A549 (cell line): ENCODE measurements at regions of chr2 and their contacts with region 1.

Region 1: GRCh38 chr2:234135720-234136221 is 85.3 kb downstream of the SPP2 start:
- DNase-seq: peak; percentile 80 to 94
- ATAC-seq: peak; percentile 93 to 96
- H3K4me3 ChIP-seq: no peak overlapping the region
- H3K27ac ChIP-seq: peak overlapping the region; percentile 82 to 94
- H3K4me1 ChIP-seq: peaks cover 30% of the 10 kb centered on the region
- CTCF ChIP-seq: peak; percentile 92
- EP300 ChIP-seq: no peak
- POLR2A ChIP-seq: no peak
- RAD21 ChIP-seq: peak; percentile 99

Region 2: GRCh38 chr2:233976690-233977294 is 159.0 kb before region 1 on chr2:
- CTCF ChIA-PET with region 1: interaction called, 27 read pairs
- POLR2A ChIA-PET with region 1: interaction called, 3 read pairs
- DNase-seq: peak; percentile 64 to 84
- ATAC-seq: peak; percentile 44 to 80; a peak in 4 of 6 replicates
- H3K4me3 ChIP-seq: no peak overlapping the region
- H3K27ac ChIP-seq: peak overlapping the region; percentile 84 to 98
- H3K4me1 ChIP-seq: peaks cover 83% of the 10 kb centered on the region
- CTCF ChIP-seq: peak; percentile 94
- EP300 ChIP-seq: peak in 1 of 2 experiments; percentile 42; a peak in 2 of 5 replicates
- POLR2A ChIP-seq: no peak
- RAD21 ChIP-seq: peak; percentile 97 to 98

Region 3: DNA sequence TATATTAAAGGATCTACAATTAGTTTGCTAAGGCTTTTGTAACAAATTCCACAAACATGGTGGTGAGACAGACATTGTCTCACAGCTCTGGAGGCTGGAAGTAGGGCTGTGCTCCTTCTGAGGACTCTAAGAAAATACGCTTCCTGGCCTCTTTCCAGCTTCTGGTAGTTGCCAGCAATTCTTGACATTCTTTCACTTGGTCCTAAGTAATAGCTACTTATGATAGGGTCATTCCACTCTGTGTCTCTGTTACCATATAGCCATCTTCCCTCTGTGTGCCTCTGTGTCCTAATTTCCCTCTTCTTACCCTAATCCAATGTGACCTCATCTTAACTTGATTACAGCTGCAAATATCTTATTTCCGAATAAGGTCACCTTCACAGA is 33.4 kb after region 1 on chr2:
- CTCF ChIA-PET with region 1: interaction called, 11 read pairs
- POLR2A ChIA-PET with region 1: no interaction called
- DNase-seq: peak in 1 of 2 experiments; percentile 84
- ATAC-seq: peak; percentile 82 to 89
- H3K4me3 ChIP-seq: no peak overlapping the region
- H3K27ac ChIP-seq: peak overlapping the region; percentile 80 to 88
- H3K4me1 ChIP-seq: peaks cover 25% of the 10 kb centered on the region
- CTCF ChIP-seq: no peak
- EP300 ChIP-seq: no peak
- POLR2A ChIP-seq: no peak
- RAD21 ChIP-seq: no peak

Region 4: GRCh38 chr2:234257856-234258561 is 122.2 kb after region 1 on chr2:
- CTCF ChIA-PET with region 1: interaction called, 32 read pairs
- POLR2A ChIA-PET with region 1: interaction called, 3 read pairs
- DNase-seq: peak; percentile 94 to 97
- ATAC-seq: peak; percentile 99
- H3K4me3 ChIP-seq: no peak overlapping the region
- H3K27ac ChIP-seq: peak overlapping the region; percentile 93 to 95
- H3K4me1 ChIP-seq: peaks cover 51% of the 10 kb centered on the region
- CTCF ChIP-seq: peak; percentile 77
- EP300 ChIP-seq: peak; percentile 93 to 94
- POLR2A ChIP-seq: no peak
- RAD21 ChIP-seq: peak; percentile 93 to 95

Region 5: DNA sequence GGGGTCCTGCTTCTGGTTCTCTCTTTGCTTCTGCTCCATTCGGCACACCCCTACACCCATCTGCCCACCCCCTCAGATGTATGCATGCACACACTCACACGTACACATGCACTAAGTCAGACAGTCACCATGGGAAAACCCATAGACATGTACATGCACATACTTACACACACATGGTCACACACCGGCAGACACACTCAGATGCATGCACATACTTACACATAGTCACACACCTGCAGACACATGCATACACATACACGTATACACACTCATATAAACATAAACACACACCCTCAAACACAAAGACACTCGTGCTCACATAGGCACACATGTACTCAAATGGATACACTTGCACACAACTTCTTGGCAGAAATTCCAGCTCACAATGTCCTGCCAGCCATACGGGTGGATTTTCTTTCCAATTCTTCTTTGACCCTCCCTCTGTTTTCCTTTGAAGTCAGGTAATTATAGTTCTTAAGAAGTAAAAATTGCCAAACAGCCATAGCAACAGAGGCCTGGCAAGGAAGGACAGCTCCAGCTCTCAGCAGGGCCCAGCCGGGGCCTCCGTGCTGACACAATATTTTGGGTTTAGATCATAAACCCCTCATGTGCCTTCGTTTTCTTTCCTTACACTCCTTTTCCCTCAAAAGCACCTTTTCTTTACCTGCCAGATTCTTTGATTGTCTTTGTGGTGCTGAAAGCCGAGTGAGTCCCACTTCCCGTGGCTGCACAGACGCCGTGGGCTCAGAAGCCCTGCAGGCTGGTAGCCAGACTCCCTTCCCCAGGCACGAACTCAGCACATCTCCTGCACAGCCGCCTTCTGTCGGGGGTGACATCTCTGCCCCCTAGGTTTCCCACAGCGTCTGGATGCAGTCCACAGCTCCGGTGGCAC is 165.4 kb after region 1 on chr2:
- CTCF ChIA-PET with region 1: interaction called, 22 read pairs
- POLR2A ChIA-PET with region 1: no interaction called
- DNase-seq: no peak
- ATAC-seq: no peak
- H3K4me3 ChIP-seq: no peak overlapping the region
- H3K27ac ChIP-seq: peak overlapping the region; percentile 88 to 94; a peak in 4 of 6 replicates
- H3K4me1 ChIP-seq: peaks cover 48% of the 10 kb centered on the region
- CTCF ChIP-seq: no peak
- EP300 ChIP-seq: no peak
- POLR2A ChIP-seq: no peak
- RAD21 ChIP-seq: no peak

Region 6: DNA sequence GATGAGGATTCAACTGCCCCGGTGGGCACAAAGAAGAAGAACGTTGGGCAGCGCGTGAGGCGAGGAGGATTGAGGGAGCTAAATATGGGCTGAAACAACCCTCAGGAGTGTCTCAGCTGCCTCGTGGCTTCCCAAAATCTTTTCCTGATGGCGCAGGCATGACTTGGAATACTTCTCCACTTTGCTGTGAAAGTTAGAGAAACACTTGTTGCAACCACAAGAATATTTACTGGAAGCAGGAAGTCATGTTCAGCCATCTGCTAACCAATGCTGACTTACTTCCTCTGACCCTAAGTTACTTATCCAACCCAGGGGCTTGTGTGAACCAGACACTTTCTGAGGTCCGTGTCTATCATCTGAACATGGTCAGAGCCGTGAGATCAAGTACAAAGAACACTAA is 212.3 kb after region 1 on chr2:
- CTCF ChIA-PET with region 1: interaction called, 10 read pairs
- POLR2A ChIA-PET with region 1: no interaction called
- DNase-seq: no peak
- ATAC-seq: no peak
- H3K4me3 ChIP-seq: no peak overlapping the region
- H3K27ac ChIP-seq: peak overlapping the region in 1 of 2 experiments; percentile 25; a peak in 1 of 6 replicates
- H3K4me1 ChIP-seq: no peaks in the 10 kb centered on the region
- CTCF ChIP-seq: no peak
- EP300 ChIP-seq: no peak
- POLR2A ChIP-seq: no peak
- RAD21 ChIP-seq: no peak

Region 7: GRCh38 chr2:234500394-234501006 is 364.7 kb after region 1 on chr2:
- CTCF ChIA-PET with region 1: interaction called, 34 read pairs
- POLR2A ChIA-PET with region 1: interaction called, 5 read pairs
- DNase-seq: peak in 1 of 2 experiments; percentile 83
- ATAC-seq: peak; percentile 45 to 73; a peak in 5 of 6 replicates
- H3K4me3 ChIP-seq: no peak overlapping the region
- H3K27ac ChIP-seq: peak overlapping the region; percentile 55 to 99
- H3K4me1 ChIP-seq: peaks cover 34% of the 10 kb centered on the region
- CTCF ChIP-seq: peak; percentile 87
- EP300 ChIP-seq: no peak
- POLR2A ChIP-seq: no peak
- RAD21 ChIP-seq: peak; percentile 98

Region 8: GRCh38 chr2:234643407-234643806 is 507.6 kb after region 1 on chr2:
- CTCF ChIA-PET with region 1: no interaction called
- POLR2A ChIA-PET with region 1: no interaction called
- DNase-seq: no peak
- ATAC-seq: no peak
- H3K4me3 ChIP-seq: no peak overlapping the region
- H3K27ac ChIP-seq: no peak overlapping the region
- H3K4me1 ChIP-seq: peaks cover 8% of the 10 kb centered on the region; the same call in 1 of the 3 replicates
- CTCF ChIP-seq: no peak
- EP300 ChIP-seq: no peak
- POLR2A ChIP-seq: no peak
- RAD21 ChIP-seq: no peak